ENCODE measurements at regions of chr11 and their contacts with region 1.

Region 1: DNA sequence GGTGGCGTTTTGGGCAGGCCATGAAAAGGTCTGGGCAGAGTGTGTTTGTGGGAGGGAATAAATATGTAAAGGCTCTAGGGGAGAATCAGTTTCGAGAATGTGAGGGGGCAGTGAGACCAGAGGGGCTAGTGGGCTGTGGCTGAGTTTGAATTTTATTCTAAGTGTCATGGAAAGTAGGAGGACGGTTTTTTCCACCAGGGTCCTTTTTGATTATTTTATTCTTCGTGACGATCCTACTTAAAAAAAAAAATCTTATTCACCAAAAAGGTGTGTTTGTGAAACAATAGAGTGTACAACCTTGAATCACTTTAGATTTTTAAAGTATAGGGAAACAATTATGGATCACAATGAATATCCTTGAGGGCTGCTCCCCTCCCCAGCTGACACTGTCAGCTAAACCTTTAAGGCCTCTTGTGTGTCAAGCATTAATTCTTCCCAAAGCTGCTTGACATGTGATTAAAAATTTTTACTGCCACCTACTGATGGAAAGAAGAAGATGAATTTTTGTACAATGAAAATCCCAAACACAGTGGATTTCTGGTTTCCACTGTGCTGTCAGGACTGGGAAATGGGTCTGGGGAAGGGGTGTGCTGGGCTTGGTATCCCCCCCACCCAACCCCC is 107.5 kb upstream of the OR4B1 start:
- DNase-seq: peak; percentile 54
- H3K4me3 Mint-ChIP-seq: peak overlapping the region; percentile 66
- H3K27ac Mint-ChIP-seq: no peak overlapping the region
- H3K4me1 Mint-ChIP-seq: peaks cover 6% of the 10 kb centered on the region
- H3K27me3 Mint-ChIP-seq: no peaks in the 10 kb centered on the region
- CTCF ChIP-seq: peak; percentile 28

Region 2: DNA sequence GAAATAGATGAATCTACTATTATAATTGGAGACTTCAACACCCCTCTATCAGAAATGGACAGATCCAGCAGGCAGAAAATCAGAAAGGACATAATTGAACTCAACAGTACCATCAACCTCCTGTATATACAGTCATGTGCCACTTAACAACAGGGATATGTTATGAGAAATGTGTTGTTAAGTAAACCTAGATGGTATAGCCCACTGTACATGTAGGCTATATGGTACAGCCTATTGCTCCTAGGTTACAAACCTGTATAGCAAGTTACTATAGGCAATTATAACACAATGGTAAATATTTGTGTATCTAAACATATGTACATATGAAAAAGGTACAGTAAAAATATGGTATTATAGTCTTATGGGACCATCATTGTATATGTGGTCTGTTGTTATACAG is 1921.1 kb before region 1 on chr11:
- CTCF ChIA-PET with region 1: no interaction called
- POLR2A ChIA-PET with region 1: no interaction called
- intact Hi-C with region 1: no loop called
- DNase-seq: no peak
- H3K4me3 Mint-ChIP-seq: no peak overlapping the region
- H3K27ac Mint-ChIP-seq: no peak overlapping the region
- H3K4me1 Mint-ChIP-seq: peaks cover 6% of the 10 kb centered on the region
- H3K27me3 Mint-ChIP-seq: no peaks in the 10 kb centered on the region
- CTCF ChIP-seq: no peak

Region 3: DNA sequence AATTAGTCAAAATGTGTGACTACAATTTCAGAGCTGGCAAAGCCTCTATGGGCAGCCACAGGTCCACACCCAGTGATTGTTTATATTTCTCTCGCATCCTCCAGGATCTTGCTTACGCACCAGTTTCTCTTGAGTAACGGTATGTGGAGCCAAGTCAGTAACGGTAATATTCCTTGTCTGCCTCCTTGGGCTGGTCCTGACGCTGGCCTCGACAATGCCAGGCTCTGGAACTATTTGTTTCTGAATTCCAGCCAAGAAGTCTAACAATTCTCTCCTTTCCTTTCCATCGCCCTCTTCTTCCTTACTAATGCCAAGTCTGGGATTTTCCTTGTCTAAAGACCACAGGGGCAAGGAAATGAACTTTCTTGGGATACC is 251.0 kb before region 1 on chr11:
- CTCF ChIA-PET with region 1: interaction called, 11 read pairs
- POLR2A ChIA-PET with region 1: interaction called, 3 read pairs
- intact Hi-C with region 1: loop called (anchors 5 kb)
- DNase-seq: peak; percentile 89
- H3K4me3 Mint-ChIP-seq: no peak overlapping the region
- H3K27ac Mint-ChIP-seq: no peak overlapping the region
- H3K4me1 Mint-ChIP-seq: peaks cover 23% of the 10 kb centered on the region
- H3K27me3 Mint-ChIP-seq: no peaks in the 10 kb centered on the region
- CTCF ChIP-seq: no peak

Region 4: GRCh38 chr11:47932544-47932943 is 176.6 kb before region 1 on chr11:
- CTCF ChIA-PET with region 1: interaction called, 451 read pairs
- POLR2A ChIA-PET with region 1: interaction called, 20 read pairs
- intact Hi-C with region 1: loop called (anchors 1 kb)
- DNase-seq: no peak
- H3K4me3 Mint-ChIP-seq: no peak overlapping the region
- H3K27ac Mint-ChIP-seq: no peak overlapping the region
- H3K4me1 Mint-ChIP-seq: no peaks in the 10 kb centered on the region
- H3K27me3 Mint-ChIP-seq: no peaks in the 10 kb centered on the region
- CTCF ChIP-seq: no peak

Region 5: DNA sequence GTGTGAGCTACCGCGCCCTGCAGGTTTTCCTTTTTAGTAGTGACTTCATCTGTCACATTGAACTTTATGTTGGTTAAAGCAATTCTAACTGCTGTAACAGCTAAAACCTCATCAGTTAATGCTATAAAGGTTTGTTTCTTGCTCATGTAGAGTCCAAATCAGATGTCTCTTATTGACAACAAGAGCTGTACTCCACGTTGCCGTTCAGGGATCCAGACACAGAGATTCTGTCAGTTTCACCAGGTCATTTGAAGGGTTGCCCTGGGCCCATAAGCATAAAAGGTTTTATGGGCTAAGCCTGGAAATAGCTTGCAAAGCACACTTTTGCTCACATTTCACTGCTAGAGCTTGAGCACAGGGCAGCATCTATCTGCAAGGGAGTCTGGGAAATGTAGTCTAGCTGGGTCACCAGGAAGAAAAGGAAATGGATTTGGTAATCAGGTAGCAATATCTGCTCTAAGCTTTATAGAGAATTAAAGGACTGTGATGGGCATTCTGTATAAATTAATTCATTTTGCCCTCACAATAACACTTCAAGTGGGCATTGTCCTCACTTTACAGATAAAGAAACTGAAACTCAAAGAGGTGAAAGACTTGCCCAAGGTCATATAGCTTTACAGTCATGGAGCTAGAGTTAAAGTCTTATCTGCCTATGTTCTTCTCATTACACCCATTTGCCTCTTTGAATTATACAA is 153.9 kb before region 1 on chr11:
- CTCF ChIA-PET with region 1: interaction called, 10 read pairs
- POLR2A ChIA-PET with region 1: no interaction called
- intact Hi-C with region 1: no loop called
- DNase-seq: no peak
- H3K4me3 Mint-ChIP-seq: no peak overlapping the region
- H3K27ac Mint-ChIP-seq: no peak overlapping the region
- H3K4me1 Mint-ChIP-seq: no peaks in the 10 kb centered on the region
- H3K27me3 Mint-ChIP-seq: no peaks in the 10 kb centered on the region
- CTCF ChIP-seq: no peak

Region 6: DNA sequence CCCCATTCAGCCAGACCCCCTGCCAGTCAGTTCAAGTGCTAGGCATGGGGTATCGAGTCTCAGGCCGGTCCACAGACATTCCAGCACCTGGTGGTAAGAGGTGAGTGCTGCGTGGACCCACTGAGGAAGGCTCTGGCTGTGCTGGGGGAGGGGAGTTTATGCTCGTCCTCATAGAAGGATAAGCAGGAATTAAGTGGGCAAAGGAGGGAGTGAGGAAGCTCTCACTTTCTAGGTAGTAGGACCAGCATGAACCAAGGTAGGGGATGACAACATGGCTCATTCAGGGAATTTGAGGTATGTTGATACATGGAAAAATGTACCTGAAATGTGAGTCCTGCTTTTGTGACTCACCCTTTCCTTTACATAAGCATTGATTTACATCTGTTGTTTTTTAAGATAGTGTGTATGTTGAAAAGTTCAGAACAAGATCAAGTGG is 12.1 kb before region 1 on chr11:
- CTCF ChIA-PET with region 1: interaction called, 37 read pairs
- POLR2A ChIA-PET with region 1: no interaction called
- intact Hi-C with region 1: no loop called
- DNase-seq: peak; percentile 33
- H3K4me3 Mint-ChIP-seq: no peak overlapping the region
- H3K27ac Mint-ChIP-seq: no peak overlapping the region
- H3K4me1 Mint-ChIP-seq: peaks cover 5% of the 10 kb centered on the region
- H3K27me3 Mint-ChIP-seq: peaks cover 16% of the 10 kb centered on the region
- CTCF ChIP-seq: no peak

Region 7: DNA sequence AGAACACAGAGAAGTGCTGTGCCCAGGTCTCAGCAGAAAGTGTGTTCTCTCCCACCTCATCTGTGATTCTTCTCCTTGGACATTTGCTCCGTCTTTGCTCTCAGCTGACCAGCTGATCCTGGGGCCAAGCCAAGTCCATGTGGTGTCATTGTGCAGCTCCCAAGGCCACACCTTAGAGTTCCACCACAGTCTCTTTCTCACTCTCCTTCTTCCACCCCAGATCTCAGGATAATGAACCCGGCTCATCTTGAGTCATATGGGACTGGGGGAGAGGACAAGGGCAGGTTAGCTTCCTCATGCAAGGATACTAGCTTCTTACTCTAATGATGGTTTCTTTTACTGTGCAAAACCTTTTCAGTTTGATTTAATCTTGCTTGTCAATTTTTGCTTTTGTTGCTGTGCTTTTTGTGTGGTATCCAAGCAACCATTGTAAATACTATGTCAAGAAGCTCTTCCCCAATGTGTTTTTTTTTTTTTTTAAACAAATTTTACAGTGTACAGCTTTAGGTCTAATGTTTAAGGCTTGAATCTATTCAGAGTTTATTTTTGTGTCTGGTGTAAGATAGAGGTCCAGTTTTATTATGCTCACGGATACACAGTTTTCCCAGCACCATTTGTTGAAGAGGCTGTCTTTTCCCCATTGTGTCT is 32.4 kb after region 1 on chr11:
- CTCF ChIA-PET with region 1: no interaction called
- POLR2A ChIA-PET with region 1: no interaction called
- intact Hi-C with region 1: no loop called
- DNase-seq: peak; percentile 8
- H3K4me3 Mint-ChIP-seq: no peak overlapping the region
- H3K27ac Mint-ChIP-seq: no peak overlapping the region
- H3K4me1 Mint-ChIP-seq: no peaks in the 10 kb centered on the region
- H3K27me3 Mint-ChIP-seq: no peaks in the 10 kb centered on the region
- CTCF ChIP-seq: no peak